Activated CD4-positive, alpha-beta memory T cell treated with anti-CD3 and anti-CD28 coated beads, Interleukin-2, amount 10 ng/mL, durations not matched to agents 7 days and 5 days (primary cell): ENCODE measurements at regions of chr1 and their contacts with region 1.

Region 1: GRCh38 chr1:44594871-44595746 is 79.2 kb downstream of the TMEM53 start:
- DNase-seq: peak; percentile 79
- H3K4me3 Mint-ChIP-seq: no peak overlapping the region
- H3K27ac Mint-ChIP-seq: no peak overlapping the region
- H3K4me1 Mint-ChIP-seq: no peaks in the 10 kb centered on the region
- H3K27me3 Mint-ChIP-seq: peaks cover 3% of the 10 kb centered on the region

Region 2: GRCh38 chr1:44377925-44378784 is 217.0 kb before region 1 on chr1:
- CTCF ChIA-PET with region 1: interaction called, 14 read pairs
- POLR2A ChIA-PET with region 1: interaction called, 3 read pairs
- DNase-seq: peak; percentile 42
- H3K4me3 Mint-ChIP-seq: no peak overlapping the region
- H3K27ac Mint-ChIP-seq: no peak overlapping the region
- H3K4me1 Mint-ChIP-seq: no peaks in the 10 kb centered on the region
- H3K27me3 Mint-ChIP-seq: peaks cover 6% of the 10 kb centered on the region

Region 3: DNA sequence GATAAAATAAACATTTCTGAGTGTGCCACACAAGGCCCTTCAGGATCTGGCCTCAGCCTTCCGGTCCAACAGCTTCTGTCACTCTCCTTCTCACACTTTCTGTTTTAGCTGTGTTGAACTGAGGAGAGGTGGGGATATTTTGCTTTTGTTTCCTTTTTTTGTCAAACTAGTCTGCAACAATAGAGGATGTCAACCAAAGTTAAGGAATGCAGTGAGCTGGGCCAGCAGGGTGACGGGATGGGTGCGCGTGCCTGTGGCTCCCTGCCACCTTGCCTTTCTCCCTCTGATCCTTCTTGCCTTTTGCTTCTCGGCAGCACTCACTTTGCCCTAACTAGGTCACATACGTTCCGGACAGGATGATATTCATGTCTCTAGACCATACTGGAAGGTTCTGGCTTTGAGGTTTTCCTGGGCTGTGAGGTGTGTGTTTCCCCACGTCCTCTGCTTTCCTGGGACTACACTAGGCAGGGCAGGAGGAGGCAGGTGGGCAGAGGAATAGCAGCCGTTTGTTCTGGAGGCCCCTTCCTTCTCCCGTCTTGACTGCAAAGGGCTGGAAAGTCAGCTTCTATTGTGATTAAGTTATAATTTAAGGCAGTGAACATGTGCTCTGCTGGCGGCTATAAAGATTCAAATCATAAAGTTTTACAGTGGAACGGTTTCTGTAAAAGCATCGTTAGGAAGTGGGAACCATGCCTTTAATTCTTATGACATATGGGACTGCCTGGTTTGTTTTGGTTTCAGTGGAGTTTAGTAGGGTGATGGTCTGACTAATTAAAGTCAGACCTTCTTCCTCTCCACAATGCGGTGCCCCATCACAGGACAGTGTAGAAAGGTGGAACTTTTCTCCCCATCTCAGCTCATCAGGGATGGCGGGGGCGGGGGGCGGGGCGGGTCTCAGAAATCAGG is 122.2 kb before region 1 on chr1:
- CTCF ChIA-PET with region 1: no interaction called
- POLR2A ChIA-PET with region 1: no interaction called
- DNase-seq: no peak
- H3K4me3 Mint-ChIP-seq: no peak overlapping the region
- H3K27ac Mint-ChIP-seq: no peak overlapping the region
- H3K4me1 Mint-ChIP-seq: peaks cover 7% of the 10 kb centered on the region
- H3K27me3 Mint-ChIP-seq: peaks cover 33% of the 10 kb centered on the region